ENCODE measurements at regions of chr12 and their contacts with region 1.

Region 1: DNA sequence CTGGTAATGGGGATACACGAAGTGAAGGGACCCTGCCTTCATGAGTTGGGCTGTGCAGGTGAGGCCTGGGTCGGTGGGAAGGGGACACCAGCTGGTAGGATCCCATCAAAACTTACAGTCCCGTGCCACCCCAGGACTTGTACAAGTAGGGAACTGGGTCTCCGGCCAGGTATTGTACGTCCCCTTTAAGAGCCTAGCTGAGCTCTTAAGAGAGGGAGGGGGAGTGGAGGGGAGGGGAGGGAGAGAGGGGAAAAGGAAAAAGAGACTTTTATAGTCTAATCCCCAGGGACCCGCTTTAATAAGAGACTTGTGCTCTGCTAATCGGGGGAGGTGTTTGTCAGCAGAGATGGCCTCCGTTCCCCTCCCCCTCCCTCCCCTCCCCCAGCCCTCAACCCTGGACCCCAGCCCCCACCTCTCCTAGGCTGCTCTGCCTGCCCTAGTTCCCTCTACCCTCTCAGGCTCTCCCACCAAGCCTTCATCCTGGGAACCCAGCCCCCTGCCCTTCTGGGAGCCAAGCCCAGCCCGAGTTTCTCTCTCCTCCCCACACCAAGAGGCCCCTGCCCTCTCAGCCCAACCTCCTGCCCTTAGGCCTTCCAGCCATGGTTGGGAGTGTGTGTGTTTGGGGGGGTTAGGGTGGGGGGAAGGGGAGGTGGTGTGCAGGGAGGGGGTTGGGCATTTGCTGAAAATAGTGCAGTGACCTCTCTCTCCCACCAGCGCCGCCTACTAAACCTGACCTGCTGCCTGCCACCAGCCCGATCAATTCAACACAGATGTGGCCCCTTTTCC is 2.6 kb downstream of the GDF11 start:
- DNase-seq: peak in 1 of 2 donors; percentile 42
- ATAC-seq: peak; percentile 7 to 63 (median 36)
- H3K4me3 ChIP-seq: peak overlapping the region in 6 of 10 donors; percentile 6 to 90 (median 27)
- H3K27ac ChIP-seq: peak overlapping the region in 8 of 10 donors; percentile 22 to 79 (median 66)
- H3K4me1 ChIP-seq: peaks cover 0 to 59% (median 34%) of the 10 kb centered on the region in 9 donors
- H3K27me3 ChIP-seq: peaks cover 0 to 11% (median 0%) of the 10 kb centered on the region in 7 donors
- CTCF ChIP-seq: no peak

Region 2: DNA sequence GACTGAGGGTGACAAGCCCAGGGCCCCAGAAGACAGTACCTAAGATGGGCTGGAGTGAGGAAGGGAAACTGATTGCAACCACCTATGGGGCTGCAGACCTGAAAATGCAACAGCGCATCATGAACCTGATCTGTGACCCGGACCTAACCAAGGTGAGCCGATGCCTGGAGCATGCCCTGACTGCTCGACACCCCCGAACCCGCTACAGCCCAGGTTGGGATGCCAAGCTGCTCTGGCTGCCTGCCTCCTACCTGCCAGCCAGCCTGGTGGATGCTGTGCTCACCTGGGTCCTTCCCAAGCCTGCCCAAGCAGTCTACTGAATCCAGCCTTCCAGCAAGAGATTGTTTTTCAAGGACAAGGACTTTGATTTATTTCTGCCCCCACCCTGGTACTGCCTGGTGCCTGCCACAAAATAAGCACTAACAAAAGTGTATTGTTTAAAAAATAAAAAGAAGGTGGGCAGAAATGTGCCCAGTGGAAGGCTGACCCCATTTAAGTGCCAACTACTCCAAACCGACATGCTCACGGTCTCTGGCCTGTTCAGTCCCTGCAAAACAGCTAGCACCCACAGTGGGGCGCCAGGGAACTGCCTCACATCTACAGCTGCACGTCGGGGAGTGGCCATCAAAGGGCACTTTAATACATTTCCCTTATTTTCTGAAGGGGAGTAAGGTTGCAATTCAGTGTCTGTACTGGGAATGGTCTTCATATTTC is 21.2 kb before region 1 on chr12:
- intact Hi-C with region 1: no loop called
- DNase-seq: peak in 1 of 2 donors; percentile 64
- ATAC-seq: no peak
- H3K4me3 ChIP-seq: no peak overlapping the region
- H3K27ac ChIP-seq: peak overlapping the region in 7 of 10 donors; percentile 35 to 100 (median 53)
- H3K4me1 ChIP-seq: peaks cover 13 to 79% (median 71%) of the 10 kb centered on the region in 9 donors
- H3K27me3 ChIP-seq: no peaks in the 10 kb centered on the region
- CTCF ChIP-seq: peak in 8 of 9 donors; percentile 24 to 68 (median 59)

Region 3: DNA sequence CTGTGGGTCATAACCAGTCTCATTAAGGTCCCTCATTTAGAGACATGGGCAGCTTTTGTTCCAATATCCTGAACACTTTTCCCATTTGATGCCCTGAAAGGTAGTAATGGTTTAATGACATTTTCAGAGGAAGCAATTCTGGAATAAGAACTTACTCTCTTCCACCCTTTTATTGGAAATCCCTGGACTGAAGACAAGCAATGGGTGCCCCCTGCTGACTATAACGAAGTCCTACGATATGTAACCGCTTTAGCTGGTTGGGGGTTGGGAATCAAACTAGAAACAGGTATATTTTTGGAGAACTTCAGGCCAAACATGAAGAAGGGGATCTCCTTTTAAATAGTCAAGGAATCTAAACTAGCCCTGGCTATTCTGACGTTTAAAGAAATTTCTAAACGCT is 51.5 kb after region 1 on chr12:
- intact Hi-C with region 1: loop called in 6 of 10 experiments (anchors 2 to 10 kb)
- DNase-seq: peak in 1 of 2 donors; percentile 19
- ATAC-seq: peak in 3 of 8 donors; percentile 45 to 72 (median 61)
- H3K4me3 ChIP-seq: no peak overlapping the region
- H3K27ac ChIP-seq: no peak overlapping the region
- H3K4me1 ChIP-seq: peaks cover 0 to 11% (median 0%) of the 10 kb centered on the region in 9 donors
- H3K27me3 ChIP-seq: no peaks in the 10 kb centered on the region
- CTCF ChIP-seq: peak in 8 of 9 donors; percentile 13 to 67 (median 54)

Region 4: GRCh38 chr12:55931780-55932550 is 186.4 kb after region 1 on chr12:
- intact Hi-C with region 1: loop called in 2 of 10 experiments (anchors 2 to 10 kb)
- DNase-seq: peak; percentile 54 to 70
- ATAC-seq: peak; percentile 36 to 65 (median 60)
- H3K4me3 ChIP-seq: peak overlapping the region; percentile 30 to 83 (median 76)
- H3K27ac ChIP-seq: peak overlapping the region; percentile 34 to 99 (median 74)
- H3K4me1 ChIP-seq: peaks cover 0 to 68% (median 27%) of the 10 kb centered on the region in 9 donors
- H3K27me3 ChIP-seq: no peaks in the 10 kb centered on the region
- CTCF ChIP-seq: no peak

Region 5: GRCh38 chr12:55940065-55940732 is 194.6 kb after region 1 on chr12:
- intact Hi-C with region 1: loop called in 2 of 10 experiments (anchors 1 to 10 kb)
- DNase-seq: peak; percentile 73 to 87
- ATAC-seq: peak; percentile 93 to 96 (median 95)
- H3K4me3 ChIP-seq: peak overlapping the region in 6 of 10 donors; percentile 16 to 33 (median 25)
- H3K27ac ChIP-seq: peak overlapping the region in 5 of 10 donors; percentile 7 to 60 (median 27)
- H3K4me1 ChIP-seq: peaks cover 0 to 14% (median 6%) of the 10 kb centered on the region in 9 donors
- H3K27me3 ChIP-seq: no peaks in the 10 kb centered on the region
- CTCF ChIP-seq: peak; percentile 88 to 96 (median 94)

Measured in heart right ventricle (tissue), 16 donors.